ENCODE measurements at regions of chr4 and their contacts with region 1.

Region 1: DNA sequence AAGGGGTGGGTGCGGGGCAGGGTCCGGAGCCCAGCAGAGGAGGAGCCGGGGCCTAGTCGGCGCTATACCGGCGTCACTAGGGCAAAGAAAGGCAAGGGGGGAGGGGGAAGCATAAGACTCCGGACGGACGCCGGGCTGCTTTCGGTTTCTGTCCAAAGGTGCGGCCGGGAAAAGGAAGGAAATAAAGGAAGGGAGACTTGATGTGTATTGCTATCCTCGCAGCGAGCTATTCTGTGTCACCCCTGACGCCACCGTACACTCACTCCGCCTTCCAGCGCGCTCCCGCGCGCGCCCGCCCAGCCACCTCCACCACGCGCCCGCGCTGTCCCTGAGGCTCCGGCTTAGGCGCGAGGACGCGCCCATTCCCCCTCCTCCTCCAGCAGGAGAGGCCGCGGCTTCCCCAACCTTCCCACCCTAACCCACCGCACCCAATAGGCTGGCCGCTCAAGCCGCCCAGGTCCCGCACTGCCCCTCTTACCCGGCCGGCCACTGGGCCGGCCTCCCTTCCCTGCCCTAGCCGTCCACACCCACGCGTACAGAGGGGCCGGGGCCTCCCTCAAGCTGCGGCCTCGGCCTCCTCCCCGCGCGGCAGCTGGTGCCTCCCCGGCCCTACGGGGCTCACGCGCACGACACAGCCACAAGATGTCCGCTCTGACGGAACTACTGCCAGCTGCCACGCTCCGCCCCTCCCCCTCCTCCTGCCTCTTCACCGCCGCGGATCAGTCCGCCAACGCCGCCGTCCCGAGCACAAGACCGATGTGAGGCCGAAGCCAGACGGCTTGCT is at the start of gene UBE2D3:
- DNase-seq: peak; percentile 99
- H3K4me3 ChIP-seq: peak within 1 kb of the TSS; percentile 72 to 93 (median 82)
- H3K27ac ChIP-seq: peak within 1 kb of the TSS; percentile 99 to 100 (median 100)
- H3K4me1 ChIP-seq: peaks cover 33 to 52% (median 41%) of the 10 kb centered on the region in 6 donors
- H3K27me3 ChIP-seq: no peaks in the 10 kb centered on the region
- CTCF ChIP-seq: peak in 4 of 11 experiments; percentile 11 to 42 (median 23)
- POLR2A ChIP-seq: peak; percentile 70 to 89 (median 80)
- total RNA-seq, gene UBE2D3: 303 to 459 (median 316) TPM

Region 2: GRCh38 chr4:102734591-102735385 is 92.3 kb before region 1 on chr4:
- intact Hi-C with region 1: no loop called
- DNase-seq: no peak
- H3K4me3 ChIP-seq: no peak overlapping the region
- H3K27ac ChIP-seq: peak overlapping the region in 5 of 8 donors; percentile 16 to 69 (median 58)
- H3K4me1 ChIP-seq: peaks cover 0 to 34% (median 9%) of the 10 kb centered on the region in 6 donors
- H3K27me3 ChIP-seq: no peaks in the 10 kb centered on the region
- CTCF ChIP-seq: no peak
- POLR2A ChIP-seq: no peak

Region 3: DNA sequence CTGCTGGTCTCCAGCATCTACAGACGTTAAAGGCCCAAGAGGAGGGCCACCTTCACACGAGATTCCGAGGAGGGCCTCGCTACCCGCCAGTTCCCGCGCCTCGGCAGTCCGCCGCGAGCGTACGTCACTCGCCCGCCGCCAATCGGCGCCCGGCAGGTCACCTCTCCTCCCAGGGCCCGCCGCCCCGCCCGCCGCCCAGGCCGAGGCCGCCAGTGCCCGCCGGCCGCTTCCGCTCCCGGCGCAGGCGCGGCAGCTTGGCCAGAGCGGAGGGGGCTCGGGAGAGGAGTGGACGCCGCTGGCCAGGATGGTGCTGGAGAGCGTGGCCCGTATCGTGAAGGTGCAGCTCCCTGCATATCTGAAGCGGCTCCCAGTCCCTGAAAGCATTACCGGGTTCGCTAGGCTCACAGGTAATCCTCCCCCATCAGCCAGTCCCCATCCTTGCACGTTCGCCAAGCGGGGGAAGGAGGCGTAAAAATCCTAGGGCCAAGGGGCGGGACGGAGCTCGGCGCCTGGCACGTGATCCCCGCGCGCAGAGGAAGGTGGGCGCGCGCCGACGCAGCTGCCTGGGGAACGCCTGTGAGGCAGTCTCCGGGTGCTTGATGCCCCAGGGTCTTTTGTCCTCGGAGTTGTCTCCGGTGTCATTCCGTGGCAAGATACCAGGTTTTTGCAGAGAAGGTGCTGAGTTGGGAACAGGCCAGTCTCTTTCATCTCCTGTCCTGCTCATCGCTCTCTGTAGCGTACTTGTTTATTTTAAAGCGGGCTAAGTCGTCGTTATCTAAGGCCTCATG is 41.9 kb after region 1 on chr4 and contains the start of gene CISD2:
- intact Hi-C with region 1: loop called (anchors 5 kb)
- DNase-seq: peak; percentile 99
- H3K4me3 ChIP-seq: peak within 1 kb of the TSS; percentile 62 to 90 (median 74)
- H3K27ac ChIP-seq: peak within 1 kb of the TSS; percentile 91 to 99 (median 98)
- H3K4me1 ChIP-seq: peaks cover 12 to 70% (median 41%) of the 10 kb centered on the region in 6 donors
- H3K27me3 ChIP-seq: no peaks in the 10 kb centered on the region
- CTCF ChIP-seq: peak in 8 of 11 experiments; percentile 8 to 33 (median 18)
- POLR2A ChIP-seq: peak; percentile 10 to 61 (median 43)
- total RNA-seq, gene CISD2: 13.2 to 31.9 (median 26.8) TPM